ENCODE measurements at regions of chr11 and their contacts with region 1.

Region 1: GRCh38 chr11:129259931-129260348 is 67.8 kb upstream of the ARHGAP32 start:
- DNase-seq: no peak
- ATAC-seq: no peak

Region 2: DNA sequence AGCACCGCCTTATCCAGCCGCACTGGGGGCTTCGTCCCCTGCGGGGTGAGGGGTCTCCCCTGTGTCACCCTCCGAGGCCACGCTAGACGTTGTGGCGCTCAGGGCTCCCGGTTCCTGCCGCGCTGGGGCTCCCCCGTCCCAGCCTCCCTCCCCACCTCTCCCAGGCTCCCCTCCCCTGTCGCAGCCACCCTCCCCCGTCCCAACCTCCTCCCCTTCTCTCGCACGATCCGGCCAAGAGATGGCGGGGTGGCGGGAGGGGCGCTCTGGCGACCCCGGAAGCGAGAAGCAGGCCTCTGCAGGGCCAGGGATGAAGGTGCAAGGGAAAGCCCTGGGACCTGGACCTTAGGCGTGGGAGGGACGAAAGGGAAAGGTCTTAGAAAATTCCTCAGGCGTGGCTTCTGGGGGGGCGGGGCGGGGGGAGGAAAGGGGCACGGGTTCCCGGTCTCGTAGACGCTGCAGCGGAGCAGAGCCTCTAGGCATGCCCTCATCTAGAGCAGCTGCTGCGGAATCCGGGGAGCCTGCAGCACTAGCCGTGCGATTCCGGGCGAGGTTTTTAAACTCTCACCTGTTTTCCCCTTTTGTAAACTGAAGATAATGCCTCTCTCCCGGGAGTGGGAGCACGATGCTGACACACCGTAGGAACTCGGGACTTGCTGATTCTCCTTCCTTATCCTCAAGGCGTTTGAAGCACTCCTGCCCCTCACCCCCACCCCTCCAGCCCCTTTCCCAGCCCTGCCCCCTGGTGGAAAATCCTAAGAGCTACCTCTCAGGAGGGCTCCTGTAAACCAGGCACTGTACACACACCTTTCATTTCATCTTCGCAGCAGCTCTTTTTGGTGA is 354.4 kb before region 1 on chr11:
- intact Hi-C with region 1: no loop called
- DNase-seq: peak; percentile 53
- ATAC-seq: peak; percentile 72

Region 3: GRCh38 chr11:129040934-129041333 is 219.0 kb before region 1 on chr11:
- intact Hi-C with region 1: no loop called
- DNase-seq: no peak
- ATAC-seq: no peak

Region 4: DNA sequence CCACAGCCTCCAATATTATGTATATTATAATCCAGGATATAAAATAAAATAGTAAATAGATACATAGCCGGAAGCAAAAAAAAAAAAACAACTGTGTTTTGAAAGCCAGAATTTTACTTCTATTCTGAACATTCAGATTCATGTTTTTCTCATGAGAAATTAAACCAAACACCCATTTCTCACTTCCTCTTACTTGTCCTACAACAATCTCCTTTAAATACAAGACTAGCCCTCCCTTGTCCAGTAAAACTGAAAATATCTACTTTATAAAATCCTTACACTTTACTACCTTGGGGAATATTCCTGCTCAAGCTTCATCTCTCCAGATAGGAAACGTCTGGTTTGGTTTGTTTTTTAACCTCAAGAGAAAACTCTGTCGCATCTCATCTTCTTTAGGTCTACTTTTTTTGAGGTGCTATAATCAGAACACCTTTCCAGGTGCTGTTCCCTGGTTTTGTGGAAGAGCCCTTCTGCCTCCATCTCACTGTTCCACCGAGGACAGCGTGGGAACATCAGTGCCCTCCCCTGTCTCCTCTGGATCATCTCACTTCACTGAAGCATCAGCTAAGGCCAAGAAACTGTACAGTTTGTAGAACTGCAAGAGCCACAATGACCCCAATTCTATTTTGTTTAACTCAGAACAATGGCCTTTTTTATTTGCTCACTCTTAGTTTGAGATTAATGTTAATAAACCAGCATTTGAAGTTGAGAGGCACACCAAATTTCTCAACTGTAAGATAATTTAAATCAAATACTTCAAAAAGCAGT is 14.2 kb after region 1 on chr11:
- intact Hi-C with region 1: loop called (anchors 1 kb)
- DNase-seq: no peak
- ATAC-seq: no peak